Naive thymus-derived CD8-positive, alpha-beta T cell (primary cell): ENCODE measurements at regions of chr19 and their contacts with region 1.

Region 1: DNA sequence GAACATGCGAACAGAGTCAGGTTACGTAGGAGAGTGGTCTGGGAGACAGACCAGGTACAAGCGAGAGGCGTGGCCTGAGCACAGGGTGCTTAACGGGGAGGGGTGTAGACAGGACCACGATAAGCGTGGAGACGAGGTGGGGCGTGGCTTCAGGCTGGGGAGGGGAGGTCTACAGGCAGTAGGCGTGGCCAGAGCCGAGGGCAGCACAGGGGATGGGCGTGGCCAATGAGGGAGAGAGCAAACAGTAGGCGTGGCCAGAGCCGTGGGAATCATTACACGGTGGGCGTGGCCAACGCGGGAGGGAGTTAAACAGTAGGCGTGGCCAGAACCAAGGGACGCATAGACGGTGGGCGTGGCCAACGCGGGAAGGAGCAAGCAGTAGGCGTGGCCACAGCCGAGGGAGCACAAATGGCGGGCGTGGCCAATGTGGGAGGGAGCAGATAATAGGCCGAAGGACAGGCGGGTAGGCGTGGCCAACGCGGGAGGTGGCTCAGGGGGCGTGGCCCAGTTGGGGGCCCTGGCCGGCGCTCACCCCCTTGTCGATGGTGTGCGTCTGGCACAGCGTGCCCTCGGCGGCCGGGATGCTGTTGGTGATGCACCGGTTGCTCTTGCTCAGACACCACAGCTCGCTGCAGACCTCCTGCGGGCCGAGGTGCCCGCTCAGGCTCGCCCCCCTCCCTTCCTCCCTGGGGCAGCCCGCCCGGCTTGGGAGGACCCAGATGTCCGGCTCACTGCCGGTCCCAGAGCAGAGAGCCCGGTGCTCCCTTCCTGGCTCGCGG is 15.2 kb upstream of the MYO1F start:
- DNase-seq: peak; percentile 92 to 98 (median 98)
- ATAC-seq: peak; percentile 88 to 89
- H3K4me3 Mint-ChIP-seq: peak overlapping the region; percentile 72 to 92 (median 88)
- H3K27ac Mint-ChIP-seq: peak overlapping the region; percentile 1 to 96 (median 82)
- H3K4me1 Mint-ChIP-seq: peaks cover 18 to 45% (median 32%) of the 10 kb centered on the region in 4 donors
- H3K27me3 Mint-ChIP-seq: no peaks in the 10 kb centered on the region

Region 2: DNA sequence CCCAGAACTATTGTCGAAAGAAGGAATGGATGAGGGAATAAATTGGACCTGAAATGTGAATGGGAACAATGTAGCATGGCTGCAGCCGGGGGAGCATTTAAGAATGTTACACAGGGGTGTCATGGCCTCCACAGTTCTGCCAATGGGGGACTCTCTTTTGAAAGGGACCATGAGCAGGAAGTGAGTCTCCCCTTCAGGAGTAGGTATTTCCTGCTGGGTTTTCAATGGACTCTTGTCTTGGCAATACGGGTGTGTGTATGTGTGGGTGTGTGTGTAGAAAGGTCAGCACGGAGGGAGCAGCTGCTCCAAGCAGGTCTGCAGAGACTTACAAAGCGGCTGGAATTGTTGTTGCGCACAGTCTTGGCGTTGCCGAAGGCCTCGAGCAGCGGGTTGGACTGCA is 39.6 kb before region 1 on chr19:
- POLR2A ChIA-PET with region 1: no interaction called
- DNase-seq: no peak
- ATAC-seq: peak in 1 of 2 donors; percentile 29
- H3K4me3 Mint-ChIP-seq: no peak overlapping the region
- H3K27ac Mint-ChIP-seq: peak overlapping the region in 4 of 10 donors; percentile 15 to 64 (median 36)
- H3K4me1 Mint-ChIP-seq: peaks cover 10 to 23% (median 15%) of the 10 kb centered on the region in 4 donors
- H3K27me3 Mint-ChIP-seq: no peaks in the 10 kb centered on the region

Region 3: DNA sequence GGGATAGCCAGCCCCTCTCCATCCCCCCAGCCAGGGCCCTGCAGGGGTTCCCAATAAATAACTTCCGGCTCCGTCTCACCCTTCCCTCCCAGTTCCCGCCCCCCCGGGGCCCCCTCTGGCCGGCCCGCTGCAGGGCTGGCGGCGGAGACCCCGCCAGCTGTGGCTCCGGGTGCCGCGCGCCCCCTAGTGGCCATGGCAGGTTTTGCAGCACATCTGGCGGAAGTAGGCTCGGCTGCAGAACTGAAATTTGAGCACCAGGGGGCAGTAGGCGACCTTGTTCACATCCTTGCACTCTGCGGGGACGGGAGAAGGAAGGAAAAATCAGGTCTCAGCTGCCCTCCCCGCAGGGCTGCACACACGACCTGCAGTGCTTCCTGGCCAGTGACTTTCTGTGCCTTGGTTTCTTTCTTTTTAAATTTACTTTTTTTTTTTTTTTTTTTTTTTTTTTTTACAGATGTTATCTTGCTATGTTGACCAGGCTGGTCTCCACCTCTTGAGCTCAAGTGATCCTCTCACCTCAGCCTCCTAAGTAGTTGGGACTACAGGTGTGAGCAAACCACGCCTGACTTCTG is 11.6 kb before region 1 on chr19:
- POLR2A ChIA-PET with region 1: interaction called, 10 read pairs
- DNase-seq: peak; percentile 74 to 92 (median 86)
- ATAC-seq: peak; percentile 53 to 70
- H3K4me3 Mint-ChIP-seq: no peak overlapping the region
- H3K27ac Mint-ChIP-seq: peak overlapping the region in 2 of 10 donors; percentile 68 to 69
- H3K4me1 Mint-ChIP-seq: peaks cover 18 to 49% (median 41%) of the 10 kb centered on the region in 4 donors
- H3K27me3 Mint-ChIP-seq: no peaks in the 10 kb centered on the region

Region 4: DNA sequence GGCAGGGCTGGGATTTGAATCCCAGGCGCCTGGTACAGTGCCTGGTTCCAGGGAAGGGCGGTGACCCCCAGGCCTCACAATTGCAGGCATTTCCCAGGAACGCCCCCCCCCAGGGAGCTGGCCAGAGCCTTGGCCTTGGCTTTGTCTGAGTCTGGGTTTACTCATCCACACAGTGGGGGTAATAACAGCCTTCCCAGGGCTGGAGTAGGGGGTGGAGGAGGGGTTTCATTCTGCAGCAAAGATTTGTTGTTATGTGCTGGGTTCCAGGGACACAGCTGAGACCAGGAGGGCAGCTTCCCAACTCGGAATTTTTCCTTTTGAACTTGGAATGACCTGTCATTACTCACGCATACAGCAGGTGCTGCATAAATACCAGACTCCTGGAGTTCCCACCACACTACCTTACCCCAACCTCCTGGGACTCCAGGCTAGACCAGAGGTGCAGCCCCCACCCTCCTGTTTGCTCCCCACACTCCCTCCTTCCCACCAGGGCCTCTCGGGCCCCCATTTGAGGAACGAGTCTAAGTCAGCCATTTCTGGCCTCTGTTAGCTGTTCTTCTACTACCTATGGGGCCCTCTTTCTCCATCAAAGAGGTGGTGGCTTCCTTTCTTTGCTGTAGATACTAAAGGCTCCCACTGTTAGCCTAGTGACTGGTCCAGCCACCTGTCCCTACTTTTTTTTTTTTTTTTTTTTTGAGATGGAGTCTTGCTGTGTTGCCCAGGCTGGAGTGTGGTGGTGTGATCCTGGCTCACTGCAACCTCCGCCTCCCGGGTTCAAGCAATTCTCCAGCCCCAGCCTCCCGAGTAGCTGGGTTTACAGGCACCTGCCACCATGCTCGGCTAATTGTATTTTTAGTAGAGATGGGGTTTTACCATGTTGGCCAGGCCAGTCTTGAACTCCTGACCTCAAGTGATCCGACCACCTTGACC is 19.7 kb after region 1 on chr19:
- POLR2A ChIA-PET with region 1: interaction called, 10 read pairs
- DNase-seq: peak in 7 of 10 donors; percentile 23 to 61 (median 29)
- ATAC-seq: peak; percentile 34 to 38
- H3K4me3 Mint-ChIP-seq: peak overlapping the region; percentile 54 to 92 (median 83)
- H3K27ac Mint-ChIP-seq: peak overlapping the region; percentile 70 to 96 (median 93)
- H3K4me1 Mint-ChIP-seq: peaks cover 38 to 62% (median 59%) of the 10 kb centered on the region in 4 donors
- H3K27me3 Mint-ChIP-seq: peaks cover 0 to 2% (median 0%) of the 10 kb centered on the region in 5 donors